A549 (cell line): ENCODE measurements at regions of chr5 and their contacts with region 1.

Region 1: GRCh38 chr5:173010547-173011464 is 27.2 kb downstream of the ATP6V0E1 start:
- DNase-seq: peak in 1 of 2 experiments; percentile 54
- ATAC-seq: peak; percentile 62 to 78; a peak in 5 of 6 replicates
- H3K4me3 ChIP-seq: no peak overlapping the region
- H3K27ac ChIP-seq: no peak overlapping the region; a peak in 1 of 6 replicates
- H3K4me1 ChIP-seq: peaks cover 10% of the 10 kb centered on the region
- CTCF ChIP-seq: no peak
- EP300 ChIP-seq: no peak
- POLR2A ChIP-seq: no peak
- RAD21 ChIP-seq: peak in 1 of 2 experiments; percentile 44; a peak in 2 of 5 replicates

Region 2: DNA sequence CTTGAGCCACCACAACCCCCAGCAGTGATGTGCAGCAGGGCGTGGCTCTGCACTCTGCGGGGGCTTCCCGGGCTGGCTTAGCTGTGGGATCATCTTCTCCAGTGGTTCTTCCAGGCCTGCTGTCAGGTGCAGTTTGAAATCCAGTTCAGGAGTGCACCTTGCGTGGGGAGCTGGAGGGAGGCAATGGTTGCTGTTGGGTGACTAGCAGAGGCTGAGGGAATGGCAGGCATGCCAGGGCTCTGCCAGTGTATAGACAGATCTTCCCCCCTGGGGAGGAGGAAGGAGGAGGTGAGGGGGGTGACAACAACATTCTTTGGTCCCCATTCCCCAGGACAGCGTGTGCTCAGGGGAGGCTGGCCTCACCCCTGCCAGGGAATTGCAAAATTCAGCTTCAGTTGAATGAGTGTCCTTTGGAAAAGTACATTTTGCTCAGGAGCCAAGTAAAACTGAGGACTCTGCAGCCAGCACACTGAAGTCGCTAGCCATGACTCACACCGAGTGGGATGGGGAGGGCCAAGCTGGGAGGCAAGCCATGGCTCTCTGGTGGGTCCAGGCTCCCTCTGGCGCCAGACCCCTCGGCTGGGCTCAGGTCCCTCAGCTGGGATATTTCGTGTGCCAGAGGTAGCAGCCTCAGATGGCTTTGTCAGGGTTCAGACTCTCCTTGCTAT is 141.7 kb before region 1 on chr5:
- CTCF ChIA-PET with region 1: no interaction called
- POLR2A ChIA-PET with region 1: no interaction called
- DNase-seq: peak; percentile 83 to 93
- ATAC-seq: peak; percentile 79 to 80
- H3K4me3 ChIP-seq: 0 out of 3 replicates have a peak overlapping the region, but pooled peaks have one; percentile 18
- H3K27ac ChIP-seq: peak overlapping the region; percentile 96 to 99
- H3K4me1 ChIP-seq: peaks cover 95% of the 10 kb centered on the region
- CTCF ChIP-seq: no peak; the same call in 2 of the 3 replicates
- EP300 ChIP-seq: peak; percentile 91 to 95; a peak in 4 of 5 replicates
- POLR2A ChIP-seq: no peak
- RAD21 ChIP-seq: peak; percentile 55 to 70

Region 3: DNA sequence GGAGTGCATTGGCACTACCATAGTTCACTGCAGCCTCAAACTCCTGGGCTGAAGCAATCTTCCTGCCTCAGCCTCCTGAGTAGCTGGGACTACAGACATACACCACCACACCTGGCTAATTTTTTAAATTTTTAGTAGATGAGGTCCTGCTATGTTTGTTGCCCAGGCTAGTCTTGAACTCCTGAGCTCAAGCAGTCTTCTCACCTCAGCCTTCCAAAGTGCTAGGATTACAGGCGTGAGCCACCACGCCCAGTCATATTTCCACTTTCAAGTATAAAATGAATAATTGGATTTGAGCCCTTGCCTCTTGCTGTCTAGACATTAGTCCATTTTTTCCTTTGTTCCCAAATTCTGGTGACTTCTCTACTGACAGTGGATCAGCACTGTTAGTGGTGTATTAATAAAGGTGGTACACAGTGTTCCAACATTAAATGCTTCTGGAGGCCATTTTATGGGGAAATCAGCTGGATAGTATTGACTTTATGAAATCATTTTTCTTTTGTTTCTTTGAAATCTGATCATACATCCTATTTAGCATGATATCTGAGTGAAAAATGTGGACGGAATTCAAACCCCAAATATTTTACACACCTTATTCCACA is 11.3 kb before region 1 on chr5:
- CTCF ChIA-PET with region 1: interaction called, 10 read pairs
- POLR2A ChIA-PET with region 1: no interaction called
- DNase-seq: no peak
- ATAC-seq: peak in 1 of 2 experiments; percentile 27; a peak in 1 of 6 replicates
- H3K4me3 ChIP-seq: no peak overlapping the region
- H3K27ac ChIP-seq: peak overlapping the region; percentile 26 to 43; a peak in 2 of 6 replicates
- H3K4me1 ChIP-seq: peaks cover 20% of the 10 kb centered on the region; the same call in 2 of the 3 replicates
- CTCF ChIP-seq: no peak
- EP300 ChIP-seq: no peak
- POLR2A ChIP-seq: no peak
- RAD21 ChIP-seq: no peak

Region 4: GRCh38 chr5:173271419-173271818 is 260.6 kb after region 1 on chr5:
- CTCF ChIA-PET with region 1: no interaction called
- POLR2A ChIA-PET with region 1: no interaction called
- DNase-seq: no peak
- ATAC-seq: no peak
- H3K4me3 ChIP-seq: no peak overlapping the region
- H3K27ac ChIP-seq: no peak overlapping the region
- H3K4me1 ChIP-seq: no peaks in the 10 kb centered on the region
- CTCF ChIP-seq: no peak
- EP300 ChIP-seq: no peak
- POLR2A ChIP-seq: no peak
- RAD21 ChIP-seq: no peak

Region 5: GRCh38 chr5:173283318-173284288 is 272.8 kb after region 1 on chr5:
- CTCF ChIA-PET with region 1: no interaction called
- POLR2A ChIA-PET with region 1: no interaction called
- DNase-seq: peak; percentile 80 to 82
- ATAC-seq: peak; percentile 94 to 98
- H3K4me3 ChIP-seq: peak overlapping the region; percentile 34
- H3K27ac ChIP-seq: peak overlapping the region; percentile 69 to 79
- H3K4me1 ChIP-seq: peaks cover 4% of the 10 kb centered on the region; the same call in 1 of the 3 replicates
- CTCF ChIP-seq: peak; percentile 78
- EP300 ChIP-seq: no peak
- POLR2A ChIP-seq: no peak
- RAD21 ChIP-seq: peak; percentile 69 to 82